PC-3 (cell line): ENCODE measurements at regions of chr2 and their contacts with region 1.

Region 1: GRCh38 chr2:202577250-202578183 is 57.3 kb upstream of the FAM117B start:
- DNase-seq: no peak
- ATAC-seq: no peak
- H3K4me3 ChIP-seq: no peak overlapping the region
- H3K27ac ChIP-seq: no peak overlapping the region
- H3K4me1 ChIP-seq: no peaks in the 10 kb centered on the region; the same call in 1 of the 2 replicates
- H3K27me3 ChIP-seq: no peaks in the 10 kb centered on the region
- CTCF ChIP-seq: no peak

Region 2: GRCh38 chr2:203122301-203122986 is 544.9 kb after region 1 on chr2:
- CTCF ChIA-PET with region 1: no interaction called
- POLR2A ChIA-PET with region 1: no interaction called
- intact Hi-C with region 1: loop called (anchors 10 kb)
- DNase-seq: peak; percentile 13
- ATAC-seq: peak; percentile 61
- H3K4me3 ChIP-seq: no peak overlapping the region
- H3K27ac ChIP-seq: no peak overlapping the region
- H3K4me1 ChIP-seq: no peaks in the 10 kb centered on the region
- H3K27me3 ChIP-seq: no peaks in the 10 kb centered on the region
- CTCF ChIP-seq: peak; percentile 35; the same call in 1 of the 2 replicates